ENCODE measurements at regions of chr1 and their contacts with region 1.

Region 1: DNA sequence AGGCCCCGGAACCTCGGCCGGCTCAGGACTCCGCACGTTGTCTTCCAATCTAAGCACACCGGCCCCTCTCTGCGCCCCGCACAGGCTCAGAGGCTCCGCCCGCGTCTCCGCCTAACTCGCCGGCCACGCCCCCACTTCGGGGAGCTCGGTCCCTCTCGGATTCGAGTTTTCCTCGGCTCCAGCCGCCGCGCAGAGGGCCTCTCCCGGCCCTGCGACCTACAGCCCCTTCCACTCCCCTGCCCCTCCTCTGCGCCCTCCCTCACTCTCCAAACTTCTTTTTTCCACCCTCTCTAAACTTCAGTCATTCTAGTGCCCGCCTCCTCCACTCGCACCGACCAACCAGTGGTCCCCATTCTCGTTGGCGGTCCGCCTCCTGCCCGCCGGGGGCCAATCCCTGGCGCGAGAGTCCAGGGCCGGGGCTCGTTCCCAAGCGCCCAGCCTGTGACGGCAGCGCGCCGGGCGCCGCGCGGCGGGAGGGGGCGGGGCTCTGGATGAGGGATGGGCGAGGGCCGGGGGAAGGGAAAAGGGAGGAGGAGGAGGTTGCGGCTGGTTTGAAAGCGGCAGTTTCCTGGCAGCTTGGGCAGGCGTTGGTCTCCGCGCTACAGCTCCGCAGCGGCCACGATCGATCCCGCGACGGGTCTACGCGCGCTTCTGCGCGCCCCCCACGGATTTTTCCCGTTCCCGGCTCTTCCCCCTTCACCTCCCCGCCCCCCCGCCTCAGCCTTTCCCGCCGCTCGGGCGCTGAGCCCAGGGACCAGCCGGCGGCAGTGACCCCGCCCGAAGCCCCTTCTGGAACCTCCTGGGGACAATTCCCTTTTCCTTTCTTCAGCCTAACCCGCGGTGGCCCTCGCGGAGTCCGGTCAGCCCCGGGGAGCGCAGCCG is at the start of gene MAGI3:
- DNase-seq: peak; percentile 95
- H3K4me3 Mint-ChIP-seq: peak within 1 kb of the TSS; percentile 88
- H3K27ac Mint-ChIP-seq: peak within 1 kb of the TSS; percentile 79
- H3K4me1 Mint-ChIP-seq: peaks cover 30% of the 10 kb centered on the region
- H3K27me3 Mint-ChIP-seq: peaks cover 33% of the 10 kb centered on the region
- total RNA-seq, gene MAGI3: 3.0 and 3.2 TPM in 2 replicates

Region 2: DNA sequence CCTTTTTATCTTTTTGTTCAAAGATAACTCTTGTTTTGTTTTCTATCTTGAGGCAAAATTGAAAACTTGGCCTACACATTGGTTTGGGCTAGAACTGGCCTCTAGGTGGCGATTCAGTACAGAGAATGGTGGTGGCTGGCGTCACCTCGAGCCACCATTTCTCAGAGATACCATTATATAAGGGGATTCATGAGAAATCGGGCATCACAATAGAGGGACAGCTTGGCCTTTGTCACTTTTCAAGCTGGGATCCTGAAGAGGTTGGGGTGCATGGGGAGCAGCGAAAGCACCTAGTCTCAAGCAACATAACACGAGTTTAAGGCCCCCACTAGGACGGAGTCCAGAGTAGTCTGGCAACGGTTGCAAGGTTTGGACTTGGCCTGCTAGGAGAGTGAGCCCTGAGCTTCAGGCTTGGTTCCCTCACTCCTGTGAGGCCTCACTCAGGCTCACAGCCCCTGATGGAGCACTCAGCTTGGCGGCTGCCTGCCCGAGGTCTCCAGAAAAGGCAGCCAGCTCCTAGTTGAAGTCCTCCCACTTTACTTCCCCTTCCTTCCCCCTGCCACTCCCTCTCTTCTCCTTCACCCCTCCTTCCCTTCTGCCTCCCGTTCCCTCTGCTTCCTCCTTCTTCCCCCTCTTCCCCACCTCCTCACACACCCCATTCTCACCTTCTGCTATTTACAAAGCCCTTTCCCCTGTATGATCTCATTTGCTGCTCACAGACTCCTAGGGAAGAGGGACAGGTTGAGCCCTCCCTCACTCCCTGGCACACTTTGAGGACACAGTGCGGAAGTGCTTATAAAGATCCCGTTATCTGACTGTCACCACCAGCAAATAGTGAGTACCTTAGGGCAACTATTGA is 249.4 kb before region 1 on chr1:
- intact Hi-C with region 1: loop called (anchors 5 kb)
- DNase-seq: peak; percentile 24
- H3K4me3 Mint-ChIP-seq: no peak overlapping the region
- H3K27ac Mint-ChIP-seq: no peak overlapping the region
- H3K4me1 Mint-ChIP-seq: peaks cover 15% of the 10 kb centered on the region
- H3K27me3 Mint-ChIP-seq: no peaks in the 10 kb centered on the region

Region 3: GRCh38 chr1:113677250-113678158 is 287.3 kb after region 1 on chr1:
- intact Hi-C with region 1: loop called (anchors 5 kb)
- DNase-seq: no peak
- H3K4me3 Mint-ChIP-seq: no peak overlapping the region
- H3K27ac Mint-ChIP-seq: no peak overlapping the region
- H3K4me1 Mint-ChIP-seq: peaks cover 6% of the 10 kb centered on the region
- H3K27me3 Mint-ChIP-seq: no peaks in the 10 kb centered on the region

Region 4: GRCh38 chr1:113783254-113784099 is 393.3 kb after region 1 on chr1:
- intact Hi-C with region 1: loop called (anchors 10 kb)
- DNase-seq: peak; percentile 41
- H3K4me3 Mint-ChIP-seq: peak overlapping the region; percentile 59
- H3K27ac Mint-ChIP-seq: peak overlapping the region; percentile 93
- H3K4me1 Mint-ChIP-seq: peaks cover 25% of the 10 kb centered on the region
- H3K27me3 Mint-ChIP-seq: no peaks in the 10 kb centered on the region